Activated CD4-positive, alpha-beta memory T cell treated with anti-CD3 and anti-CD28 coated beads for 36 hours (primary cell): ENCODE measurements at regions of chr4 and their contacts with region 1.

Region 1: GRCh38 chr4:181143250-181143854 is 1099.8 kb upstream of the TENM3 start:
- DNase-seq: peak; percentile 75
- H3K4me3 Mint-ChIP-seq: no peak overlapping the region
- H3K27ac Mint-ChIP-seq: no peak overlapping the region
- H3K4me1 Mint-ChIP-seq: no peaks in the 10 kb centered on the region
- H3K27me3 Mint-ChIP-seq: no peaks in the 10 kb centered on the region

Region 2: DNA sequence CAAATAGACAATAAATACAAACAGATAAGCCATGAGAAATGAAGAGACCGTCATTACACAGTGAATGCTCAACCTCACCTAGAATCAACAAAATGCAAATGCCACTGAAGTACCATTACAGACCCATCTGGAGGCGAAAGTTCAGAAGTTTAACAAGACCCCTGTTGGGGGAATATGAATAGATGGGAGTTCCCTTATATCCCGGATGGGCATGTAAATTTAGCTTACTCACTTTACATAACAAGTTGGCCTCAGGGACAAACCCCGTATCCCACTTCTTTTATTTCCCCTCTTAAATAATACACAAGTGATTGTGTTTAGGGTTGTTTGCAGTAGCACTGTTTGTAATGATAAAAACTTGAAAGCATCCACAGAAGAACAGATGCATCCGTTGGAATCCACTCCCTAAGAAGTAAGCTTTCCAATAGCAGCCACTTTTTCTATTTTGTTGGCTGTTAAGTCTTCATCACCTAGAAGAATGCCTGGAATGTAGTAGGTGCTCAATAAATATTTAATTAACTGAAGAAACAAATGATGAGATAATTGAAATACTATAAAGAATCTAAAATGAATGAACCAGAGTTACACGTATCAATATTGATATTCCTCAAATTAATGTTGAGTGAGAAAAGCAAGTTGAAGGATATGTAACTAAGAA is 23.5 kb after region 1 on chr4:
- CTCF ChIA-PET with region 1: no interaction called
- POLR2A ChIA-PET with region 1: no interaction called
- intact Hi-C with region 1: no loop called
- DNase-seq: no peak
- H3K4me3 Mint-ChIP-seq: no peak overlapping the region
- H3K27ac Mint-ChIP-seq: no peak overlapping the region
- H3K4me1 Mint-ChIP-seq: no peaks in the 10 kb centered on the region
- H3K27me3 Mint-ChIP-seq: no peaks in the 10 kb centered on the region

Region 3: DNA sequence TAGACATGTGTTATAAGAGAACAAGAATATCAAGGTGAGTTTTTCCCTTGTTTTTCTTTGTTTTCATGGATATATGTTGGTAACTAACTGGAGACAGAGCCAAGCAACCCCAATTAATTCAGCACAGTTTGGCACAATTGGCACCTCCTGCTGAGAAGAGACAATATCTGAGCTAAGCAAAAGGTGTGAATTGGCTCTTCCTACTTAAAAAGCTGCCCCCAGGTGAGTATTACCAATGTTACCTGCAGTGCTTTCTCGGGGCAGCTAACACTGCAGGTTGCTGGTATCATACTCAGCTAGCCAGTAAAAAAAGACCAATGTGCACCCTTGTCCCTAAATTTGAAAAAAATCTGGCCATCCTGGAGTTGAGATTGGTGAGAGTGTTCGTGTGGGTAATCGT is 228.7 kb after region 1 on chr4:
- CTCF ChIA-PET with region 1: no interaction called
- POLR2A ChIA-PET with region 1: no interaction called
- intact Hi-C with region 1: no loop called
- DNase-seq: no peak
- H3K4me3 Mint-ChIP-seq: no peak overlapping the region
- H3K27ac Mint-ChIP-seq: no peak overlapping the region
- H3K4me1 Mint-ChIP-seq: no peaks in the 10 kb centered on the region
- H3K27me3 Mint-ChIP-seq: no peaks in the 10 kb centered on the region

Region 4: GRCh38 chr4:181528570-181529184 is 385.3 kb after region 1 on chr4:
- CTCF ChIA-PET with region 1: interaction called, 15 read pairs
- POLR2A ChIA-PET with region 1: no interaction called
- intact Hi-C with region 1: loop called (anchors 1 kb)
- DNase-seq: peak; percentile 40
- H3K4me3 Mint-ChIP-seq: no peak overlapping the region
- H3K27ac Mint-ChIP-seq: no peak overlapping the region
- H3K4me1 Mint-ChIP-seq: no peaks in the 10 kb centered on the region
- H3K27me3 Mint-ChIP-seq: no peaks in the 10 kb centered on the region